ENCODE measurements at regions of chrX and their contacts with region 1.

Region 1: GRCh38 chrX:37926700-37927099 is 79.3 kb upstream of the DYNLT3 start:
- DNase-seq: no peak
- H3K4me3 Mint-ChIP-seq: no peak overlapping the region
- H3K27ac Mint-ChIP-seq: no peak overlapping the region
- H3K4me1 Mint-ChIP-seq: no peaks in the 10 kb centered on the region
- H3K27me3 Mint-ChIP-seq: no peaks in the 10 kb centered on the region

Region 2: GRCh38 chrX:37912286-37912685 is 14.4 kb before region 1 on chrX:
- CTCF ChIA-PET with region 1: no interaction called
- DNase-seq: no peak
- H3K4me3 Mint-ChIP-seq: no peak overlapping the region
- H3K27ac Mint-ChIP-seq: no peak overlapping the region
- H3K4me1 Mint-ChIP-seq: no peaks in the 10 kb centered on the region
- H3K27me3 Mint-ChIP-seq: no peaks in the 10 kb centered on the region

Region 3: GRCh38 chrX:37958525-37959211 is 32.0 kb after region 1 on chrX:
- CTCF ChIA-PET with region 1: no interaction called
- DNase-seq: no peak
- H3K4me3 Mint-ChIP-seq: no peak overlapping the region
- H3K27ac Mint-ChIP-seq: no peak overlapping the region
- H3K4me1 Mint-ChIP-seq: peaks cover 2% of the 10 kb centered on the region
- H3K27me3 Mint-ChIP-seq: no peaks in the 10 kb centered on the region

Region 4: GRCh38 chrX:38166478-38167083 is 239.9 kb after region 1 on chrX:
- CTCF ChIA-PET with region 1: interaction called, 14 read pairs
- DNase-seq: no peak
- H3K4me3 Mint-ChIP-seq: no peak overlapping the region
- H3K27ac Mint-ChIP-seq: no peak overlapping the region
- H3K4me1 Mint-ChIP-seq: no peaks in the 10 kb centered on the region
- H3K27me3 Mint-ChIP-seq: no peaks in the 10 kb centered on the region

Region 5: DNA sequence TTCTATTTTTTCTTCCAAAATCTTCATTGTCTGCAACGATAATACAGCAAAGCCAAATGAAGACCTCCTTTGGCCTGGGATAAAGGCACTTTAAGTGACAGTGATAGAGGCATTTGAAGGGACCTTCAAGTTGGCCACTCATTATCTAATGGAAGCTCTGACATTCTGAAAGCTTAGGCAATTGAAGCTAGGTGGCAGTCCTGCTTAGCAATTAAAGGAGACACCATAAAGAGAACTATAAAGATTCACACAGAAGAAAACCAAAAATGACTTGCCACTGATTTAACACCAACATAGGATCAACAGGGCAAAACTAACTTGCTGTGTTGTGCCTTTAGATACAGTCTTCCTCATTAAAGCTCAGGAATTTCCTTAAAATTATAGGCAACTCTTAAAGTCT is 531.4 kb after region 1 on chrX:
- CTCF ChIA-PET with region 1: no interaction called
- DNase-seq: no peak
- H3K4me3 Mint-ChIP-seq: no peak overlapping the region
- H3K27ac Mint-ChIP-seq: no peak overlapping the region
- H3K4me1 Mint-ChIP-seq: no peaks in the 10 kb centered on the region
- H3K27me3 Mint-ChIP-seq: no peaks in the 10 kb centered on the region

Measured in activated naive CD4-positive, alpha-beta T cell treated with anti-CD3 and anti-CD28 coated beads, Interleukin-2, amount 10 ng/mL, durations not matched to agents 7 days and 5 days (primary cell).